ENCODE measurements at regions of chr2 and their contacts with region 1.

Region 1: GRCh38 chr2:28941008-28941407 is 40.1 kb upstream of the TOGARAM2 start:
- DNase-seq: no peak
- H3K4me3 ChIP-seq: no peak overlapping the region
- H3K27ac ChIP-seq: no peak overlapping the region
- H3K4me1 ChIP-seq: no peaks in the 10 kb centered on the region
- H3K27me3 ChIP-seq: no peaks in the 10 kb centered on the region
- CTCF ChIP-seq: no peak

Region 2: DNA sequence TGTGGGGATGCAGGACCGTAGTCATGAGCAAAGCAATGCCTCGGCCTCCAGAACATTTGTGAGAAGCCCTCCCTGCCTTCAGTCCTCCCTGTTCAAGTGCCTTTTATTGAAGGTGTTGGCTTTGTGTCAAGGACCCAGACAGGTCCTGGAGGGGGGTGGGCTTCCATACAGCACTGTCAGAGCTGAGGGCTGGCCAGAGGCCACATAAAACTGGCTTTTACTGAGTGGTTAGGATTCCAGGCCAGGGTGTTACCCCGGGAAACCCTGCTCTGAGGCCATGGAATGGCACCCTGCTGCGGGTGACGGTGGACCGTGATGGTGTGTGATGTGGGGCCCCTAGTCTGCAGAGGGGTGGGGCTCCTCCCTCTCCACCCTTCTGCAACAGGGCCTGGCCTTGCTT is 81.7 kb after region 1 on chr2:
- CTCF ChIA-PET with region 1: no interaction called
- POLR2A ChIA-PET with region 1: interaction called, 17 read pairs
- intact Hi-C with region 1: no loop called
- DNase-seq: peak in 1 of 2 experiments; percentile 39
- H3K4me3 ChIP-seq: no peak overlapping the region
- H3K27ac ChIP-seq: no peak overlapping the region
- H3K4me1 ChIP-seq: peaks cover 7% of the 10 kb centered on the region; the same call in 1 of the 2 replicates
- H3K27me3 ChIP-seq: no peaks in the 10 kb centered on the region
- CTCF ChIP-seq: no peak